ENCODE measurements at regions of chr12 and their contacts with region 1.

Region 1: DNA sequence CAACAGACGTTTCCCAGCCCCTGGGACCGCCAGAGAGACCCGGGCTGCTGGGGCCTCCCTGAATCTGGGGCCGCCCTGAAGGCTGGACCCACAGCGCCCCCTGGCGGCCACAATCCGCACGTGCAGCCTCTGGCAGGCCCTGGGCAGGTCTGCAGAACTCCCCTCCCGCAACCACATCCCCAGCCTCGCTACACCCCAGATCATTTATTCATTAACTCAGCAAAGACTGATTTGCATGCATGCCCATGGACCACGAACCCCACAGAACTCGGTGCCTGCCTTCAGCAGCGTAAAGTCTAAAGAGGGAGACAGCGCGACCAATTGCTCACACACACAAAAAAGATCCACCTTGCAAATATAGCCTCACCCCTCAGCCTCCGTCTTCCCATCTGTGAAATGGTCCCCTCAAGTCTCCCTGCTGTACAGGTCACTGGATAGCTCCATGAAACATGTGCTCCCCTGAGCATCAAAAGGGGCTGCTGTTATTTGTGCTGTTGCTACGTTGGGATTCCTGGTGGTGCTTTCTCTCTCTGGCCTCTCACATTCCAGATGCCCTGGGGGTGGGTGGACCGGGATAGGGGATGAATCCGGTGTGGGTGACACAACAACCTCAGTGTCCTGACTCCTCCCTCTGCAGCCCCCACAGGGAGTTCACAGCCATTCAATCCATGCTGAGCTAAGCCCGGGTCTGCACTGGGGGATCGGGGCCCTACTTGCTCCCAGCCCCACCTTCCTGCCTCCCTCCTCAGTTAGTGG is 96.4 kb downstream of the SCARB1 start:
- DNase-seq: peak; percentile 76
- H3K4me3 Mint-ChIP-seq: no peak overlapping the region
- H3K27ac Mint-ChIP-seq: peak overlapping the region; percentile 29
- H3K4me1 Mint-ChIP-seq: peaks cover 27% of the 10 kb centered on the region
- H3K27me3 Mint-ChIP-seq: peaks cover 18% of the 10 kb centered on the region

Region 2: DNA sequence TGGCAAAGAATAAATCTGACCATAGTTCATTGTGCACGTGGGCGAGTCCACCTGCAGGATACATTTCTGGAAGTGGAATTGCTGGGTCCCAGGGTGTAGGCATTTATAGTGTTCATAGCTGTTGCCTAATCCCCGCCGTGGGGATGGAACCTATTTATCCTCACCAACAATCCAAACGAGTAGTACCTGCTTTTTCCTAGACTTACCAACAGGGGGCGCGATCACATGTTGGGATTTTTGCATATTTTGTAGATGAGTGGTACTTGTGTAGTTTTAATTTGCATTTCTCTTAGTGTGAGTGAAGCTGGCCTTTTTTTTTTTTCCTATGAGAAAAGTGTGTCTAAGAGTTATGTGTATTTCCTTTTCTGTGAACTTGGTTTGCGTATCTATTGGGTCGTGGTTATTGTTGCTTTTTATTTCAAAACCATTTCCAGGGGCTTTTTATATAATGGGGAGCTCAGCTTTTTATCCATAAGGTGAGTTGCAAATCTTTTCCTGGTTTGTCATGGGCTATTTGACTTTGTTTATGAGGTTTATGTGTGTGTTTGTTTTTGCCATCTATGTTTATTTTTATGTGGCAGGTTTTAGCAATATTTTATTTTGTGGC is 861.8 kb before region 1 on chr12:
- intact Hi-C with region 1: loop called (anchors 10 kb)
- DNase-seq: peak; percentile 50
- H3K4me3 Mint-ChIP-seq: no peak overlapping the region
- H3K27ac Mint-ChIP-seq: no peak overlapping the region
- H3K4me1 Mint-ChIP-seq: peaks cover 7% of the 10 kb centered on the region
- H3K27me3 Mint-ChIP-seq: peaks cover 6% of the 10 kb centered on the region

Region 3: DNA sequence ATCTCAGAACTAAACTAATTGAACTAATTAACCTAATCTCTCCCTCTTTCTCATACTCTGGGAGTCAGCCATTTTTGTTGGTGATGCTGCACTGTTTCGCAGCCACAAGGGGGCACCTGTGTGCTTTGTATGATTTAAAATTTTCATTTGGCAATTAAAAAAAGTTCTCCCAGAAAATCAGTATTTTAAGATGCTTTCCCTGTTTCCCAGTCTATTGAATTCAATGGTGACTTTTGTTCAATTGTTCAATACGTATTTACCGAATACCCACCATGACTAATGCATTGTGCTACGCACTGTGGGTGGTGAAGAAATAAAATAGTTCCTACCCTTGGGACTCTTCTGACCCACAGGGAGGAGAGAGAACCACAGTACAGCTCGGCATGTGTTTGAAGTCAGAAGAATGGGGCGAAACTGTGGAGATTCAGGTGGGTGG is 730.6 kb before region 1 on chr12:
- intact Hi-C with region 1: loop called (anchors 1 kb)
- DNase-seq: no peak
- H3K4me3 Mint-ChIP-seq: no peak overlapping the region
- H3K27ac Mint-ChIP-seq: no peak overlapping the region
- H3K4me1 Mint-ChIP-seq: no peaks in the 10 kb centered on the region
- H3K27me3 Mint-ChIP-seq: peaks cover 14% of the 10 kb centered on the region

Region 4: DNA sequence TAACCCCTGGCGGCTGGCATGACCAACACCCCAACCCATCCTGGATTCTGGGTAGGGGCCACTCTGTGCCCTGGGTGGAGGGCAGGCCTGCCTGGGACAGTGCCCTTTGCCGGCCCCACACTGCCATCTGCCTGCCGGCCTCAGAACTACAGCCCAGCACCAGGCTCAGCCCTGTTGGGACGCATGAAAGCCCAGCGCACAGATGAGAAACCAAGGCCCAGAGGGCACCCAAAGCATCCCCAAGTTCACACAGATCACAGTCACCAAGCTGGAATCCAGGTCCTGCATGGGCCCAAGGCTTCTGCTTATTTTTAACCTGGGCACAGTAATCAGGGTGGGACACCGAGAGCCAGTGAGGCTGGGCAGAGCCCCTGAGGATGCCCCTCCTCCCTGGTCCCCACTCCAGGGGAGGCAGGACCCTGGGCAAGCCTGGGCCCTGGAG is 446.2 kb before region 1 on chr12:
- intact Hi-C with region 1: loop called (anchors 5 kb)
- DNase-seq: peak; percentile 52
- H3K4me3 Mint-ChIP-seq: no peak overlapping the region
- H3K27ac Mint-ChIP-seq: no peak overlapping the region
- H3K4me1 Mint-ChIP-seq: no peaks in the 10 kb centered on the region
- H3K27me3 Mint-ChIP-seq: no peaks in the 10 kb centered on the region

Region 5: GRCh38 chr12:124391340-124392261 is 375.6 kb before region 1 on chr12:
- intact Hi-C with region 1: loop called (anchors 5 kb)
- DNase-seq: no peak
- H3K4me3 Mint-ChIP-seq: peak overlapping the region; percentile 13
- H3K27ac Mint-ChIP-seq: peak overlapping the region; percentile 54
- H3K4me1 Mint-ChIP-seq: peaks cover 22% of the 10 kb centered on the region
- H3K27me3 Mint-ChIP-seq: peaks cover 4% of the 10 kb centered on the region

Region 6: DNA sequence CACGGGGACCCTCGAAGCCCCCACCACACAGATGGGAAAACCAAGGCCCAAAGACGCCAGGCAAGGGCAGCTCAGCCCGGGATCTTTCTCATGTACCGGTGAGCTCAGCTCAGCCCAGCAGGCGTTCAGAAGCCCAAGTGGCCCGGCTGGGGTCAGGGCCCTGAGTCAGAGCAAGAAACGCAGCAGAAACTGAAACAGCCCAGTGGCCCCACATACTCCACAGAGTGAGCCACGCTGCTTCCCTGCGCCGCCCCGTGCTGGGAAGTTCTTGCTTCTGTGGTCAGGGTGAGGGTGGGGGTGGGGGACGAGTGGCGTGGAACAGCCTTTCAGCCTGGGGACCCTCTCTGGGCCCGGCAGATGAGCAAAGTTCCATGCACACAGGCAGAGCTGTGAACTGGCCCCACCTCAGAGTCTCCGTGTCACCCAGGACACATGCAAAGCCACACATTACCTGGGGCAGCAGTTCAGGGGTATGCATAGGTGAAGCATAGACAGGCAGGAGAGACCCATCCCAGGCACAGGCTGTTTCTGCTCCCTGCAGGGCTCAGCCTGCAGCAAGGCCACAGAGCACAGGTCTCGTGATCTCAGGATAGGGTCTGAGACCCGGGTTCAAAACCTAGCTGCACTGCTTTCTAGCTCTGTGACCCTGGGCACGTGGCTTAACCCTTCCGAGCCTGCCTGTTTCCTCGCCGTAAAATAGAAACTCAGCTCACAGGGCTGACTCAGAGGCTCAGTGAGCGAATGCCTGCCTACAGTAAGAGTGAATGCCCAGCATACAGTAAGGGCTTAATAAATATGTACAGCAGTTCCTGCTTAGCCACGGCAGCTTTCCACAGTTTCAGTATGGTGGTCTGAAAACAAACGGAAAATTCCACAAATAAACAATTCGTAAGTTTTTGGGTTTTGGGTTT is 221.5 kb before region 1 on chr12:
- intact Hi-C with region 1: loop called (anchors 2 kb)
- DNase-seq: peak; percentile 57
- H3K4me3 Mint-ChIP-seq: peak overlapping the region; percentile 26
- H3K27ac Mint-ChIP-seq: peak overlapping the region; percentile 58
- H3K4me1 Mint-ChIP-seq: peaks cover 50% of the 10 kb centered on the region
- H3K27me3 Mint-ChIP-seq: peaks cover 3% of the 10 kb centered on the region

Region 7: DNA sequence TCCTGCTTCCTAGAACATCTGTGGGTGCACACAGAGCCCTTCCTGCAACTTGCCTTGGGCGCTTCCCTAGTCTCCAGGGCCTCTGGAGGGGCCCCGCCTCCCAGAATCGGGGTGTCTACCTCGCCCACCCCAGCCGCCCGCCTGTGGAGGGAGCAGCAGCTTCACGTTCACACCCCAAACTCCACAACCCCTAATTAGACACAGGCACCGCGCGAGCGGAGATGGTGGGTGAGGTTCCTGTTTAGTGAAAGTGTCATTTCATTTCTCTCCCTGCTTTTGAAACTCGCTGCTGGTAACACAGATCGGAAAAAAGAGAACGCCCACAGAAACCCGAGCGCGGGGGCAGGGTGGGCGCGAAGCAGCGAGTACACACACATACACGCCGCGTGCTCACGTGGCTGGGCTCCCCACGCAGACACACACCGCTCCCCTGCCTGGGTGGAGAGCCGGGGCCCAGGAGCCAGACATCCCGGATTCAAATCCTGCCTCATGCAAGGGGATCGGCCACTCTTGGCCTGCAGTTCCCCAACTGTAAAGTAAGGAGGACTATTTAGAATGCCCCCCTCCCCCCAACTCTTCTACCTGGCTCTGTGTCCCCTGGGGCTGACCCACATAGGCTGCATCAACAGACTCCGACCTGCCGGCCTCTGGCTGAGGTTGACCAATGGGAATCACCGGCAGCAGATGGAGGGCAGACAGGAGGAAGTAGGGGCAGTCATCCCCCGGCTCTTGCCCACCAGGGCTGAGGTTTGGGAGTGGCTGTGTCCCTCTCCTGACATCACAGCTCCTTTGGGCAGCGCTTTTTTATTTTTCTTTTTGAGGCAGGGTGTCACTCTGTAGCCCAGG is 120.6 kb before region 1 on chr12:
- intact Hi-C with region 1: loop called (anchors 5 kb)
- DNase-seq: no peak
- H3K4me3 Mint-ChIP-seq: no peak overlapping the region
- H3K27ac Mint-ChIP-seq: peak overlapping the region; percentile 25
- H3K4me1 Mint-ChIP-seq: peaks cover 5% of the 10 kb centered on the region
- H3K27me3 Mint-ChIP-seq: peaks cover 38% of the 10 kb centered on the region